Activated CD4-positive, alpha-beta memory T cell treated with anti-CD3 and anti-CD28 coated beads for 36 hours (primary cell): ENCODE measurements at regions of chr22 and their contacts with region 1.

Region 1: GRCh38 chr22:30742291-30743256 is 47.9 kb downstream of the OSBP2 start:
- DNase-seq: peak; percentile 78
- H3K4me3 Mint-ChIP-seq: peak overlapping the region; percentile 33
- H3K27ac Mint-ChIP-seq: peak overlapping the region; percentile 95
- H3K4me1 Mint-ChIP-seq: peaks cover 70% of the 10 kb centered on the region
- H3K27me3 Mint-ChIP-seq: peaks cover 2% of the 10 kb centered on the region

Region 2: DNA sequence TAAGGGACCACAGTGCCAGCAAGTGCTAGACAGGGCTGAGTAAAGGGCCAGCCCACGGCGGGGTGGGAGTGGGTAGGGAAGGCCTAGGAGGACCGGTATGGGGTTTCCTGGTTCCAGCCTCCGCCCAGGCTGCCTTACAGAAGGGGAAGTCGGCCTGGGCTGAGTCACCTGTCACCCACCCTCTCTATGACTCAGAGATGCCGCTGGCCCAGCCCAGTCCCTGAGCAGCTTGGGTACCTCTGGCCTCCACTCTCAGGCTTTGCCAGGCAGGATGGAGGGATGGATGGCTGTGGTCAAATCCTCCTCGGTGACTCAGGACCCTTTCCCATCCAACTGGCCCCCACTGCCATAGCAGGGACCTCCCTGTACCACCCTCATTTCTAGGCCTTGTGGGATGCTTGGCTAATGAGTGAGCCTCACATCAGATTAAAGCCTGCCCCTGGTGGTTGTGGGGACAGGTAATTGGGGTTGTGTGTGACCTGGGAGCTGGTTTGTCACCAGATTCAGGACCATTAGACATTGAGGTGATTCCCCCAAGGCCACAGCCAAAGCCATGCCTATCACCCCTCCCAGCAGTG is 93.1 kb before region 1 on chr22:
- CTCF ChIA-PET with region 1: interaction called, 11 read pairs
- POLR2A ChIA-PET with region 1: interaction called, 6 read pairs
- intact Hi-C with region 1: loop called (anchors 1 kb)
- DNase-seq: peak; percentile 94
- H3K4me3 Mint-ChIP-seq: no peak overlapping the region
- H3K27ac Mint-ChIP-seq: peak overlapping the region; percentile 85
- H3K4me1 Mint-ChIP-seq: peaks cover 31% of the 10 kb centered on the region
- H3K27me3 Mint-ChIP-seq: no peaks in the 10 kb centered on the region

Region 3: GRCh38 chr22:30667494-30668385 is 74.8 kb before region 1 on chr22 and contains the start of gene DUSP18:
- CTCF ChIA-PET with region 1: no interaction called
- POLR2A ChIA-PET with region 1: no interaction called
- intact Hi-C with region 1: loop called (anchors 2 kb)
- DNase-seq: peak; percentile 97
- H3K4me3 Mint-ChIP-seq: peak within 1 kb of the TSS; percentile 96
- H3K27ac Mint-ChIP-seq: peak within 1 kb of the TSS; percentile 62
- H3K4me1 Mint-ChIP-seq: peaks cover 21% of the 10 kb centered on the region
- H3K27me3 Mint-ChIP-seq: peaks cover 3% of the 10 kb centered on the region
- total RNA-seq, gene DUSP18: 9.2 to 10.6 TPM

Region 4: DNA sequence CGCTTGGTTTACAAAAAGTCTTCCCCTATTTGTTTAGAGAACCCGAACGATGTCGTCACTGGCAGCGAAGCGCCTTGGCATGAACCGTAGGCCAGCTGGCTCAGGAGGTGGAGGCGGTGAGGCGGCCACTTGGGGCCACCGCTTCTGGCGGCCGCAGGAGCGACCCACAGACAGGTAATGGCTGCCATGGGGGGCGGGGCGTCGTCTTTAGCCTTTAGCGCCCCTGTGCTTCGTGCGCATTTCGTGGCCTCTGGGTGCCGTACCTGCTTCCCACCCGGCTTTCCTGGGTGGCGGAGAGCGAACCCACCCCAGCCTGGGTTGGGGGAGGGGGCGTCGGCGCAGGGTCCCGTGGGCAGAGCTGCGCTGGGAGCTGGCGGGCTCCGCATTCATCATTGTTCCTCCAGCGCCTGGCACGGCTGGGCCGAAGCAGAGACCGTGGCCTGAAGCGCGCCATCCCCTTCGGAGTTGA is 48.4 kb before region 1 on chr22:
- CTCF ChIA-PET with region 1: interaction called, 8 read pairs
- POLR2A ChIA-PET with region 1: interaction called, 3 read pairs
- intact Hi-C with region 1: loop called (anchors 1 kb)
- DNase-seq: peak; percentile 72
- H3K4me3 Mint-ChIP-seq: peak overlapping the region; percentile 81
- H3K27ac Mint-ChIP-seq: peak overlapping the region; percentile 57
- H3K4me1 Mint-ChIP-seq: peaks cover 16% of the 10 kb centered on the region
- H3K27me3 Mint-ChIP-seq: peaks cover 7% of the 10 kb centered on the region

Region 5: GRCh38 chr22:30705710-30706651 is 36.6 kb before region 1 on chr22:
- CTCF ChIA-PET with region 1: no interaction called
- POLR2A ChIA-PET with region 1: interaction called, 4 read pairs
- intact Hi-C with region 1: loop called (anchors 1 kb)
- DNase-seq: peak; percentile 56
- H3K4me3 Mint-ChIP-seq: no peak overlapping the region
- H3K27ac Mint-ChIP-seq: peak overlapping the region; percentile 57
- H3K4me1 Mint-ChIP-seq: peaks cover 23% of the 10 kb centered on the region
- H3K27me3 Mint-ChIP-seq: no peaks in the 10 kb centered on the region

Region 6: GRCh38 chr22:30717331-30717921 is 25.1 kb before region 1 on chr22:
- CTCF ChIA-PET with region 1: no interaction called
- POLR2A ChIA-PET with region 1: interaction called, 6 read pairs
- intact Hi-C with region 1: loop called (anchors 1 kb)
- DNase-seq: peak; percentile 60
- H3K4me3 Mint-ChIP-seq: no peak overlapping the region
- H3K27ac Mint-ChIP-seq: no peak overlapping the region
- H3K4me1 Mint-ChIP-seq: peaks cover 8% of the 10 kb centered on the region
- H3K27me3 Mint-ChIP-seq: no peaks in the 10 kb centered on the region

Region 7: DNA sequence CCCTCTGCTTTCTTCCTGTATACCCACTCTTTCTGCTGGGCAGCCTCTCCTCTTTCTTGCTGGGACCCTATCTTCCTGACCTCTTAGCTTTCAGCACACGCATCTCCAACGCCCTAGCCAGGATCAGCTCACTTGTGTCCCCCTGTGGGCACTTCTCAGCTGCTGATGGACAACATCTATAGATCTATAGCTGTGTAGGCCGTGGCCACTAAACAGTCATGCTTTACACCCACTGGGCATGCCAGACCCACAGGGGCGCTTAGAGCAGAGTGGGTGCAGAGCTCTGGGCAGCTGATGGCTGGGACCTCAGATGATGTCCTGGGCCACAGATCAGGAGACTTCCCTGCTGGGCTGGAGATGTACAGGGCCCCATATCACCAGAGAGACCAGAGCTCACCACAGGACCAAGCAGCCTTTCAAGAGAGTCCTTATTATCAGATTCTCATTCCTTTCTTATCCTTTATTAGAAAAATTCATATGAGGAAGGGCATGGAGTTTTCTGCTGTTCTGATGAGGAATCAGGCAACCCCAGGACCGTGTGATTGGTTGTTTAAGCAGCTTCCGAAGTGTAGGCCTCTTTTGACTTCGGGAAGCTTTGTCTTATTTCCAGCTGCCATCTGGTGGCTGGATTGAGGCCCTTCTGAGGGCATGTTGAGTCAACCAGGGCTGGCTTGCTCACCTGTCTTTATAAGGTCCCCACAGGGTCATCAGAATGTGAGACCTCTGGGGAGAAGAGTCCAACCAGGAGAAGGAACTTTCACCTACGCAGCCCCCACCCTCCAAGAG is 12.6 kb after region 1 on chr22:
- CTCF ChIA-PET with region 1: interaction called, 39 read pairs
- POLR2A ChIA-PET with region 1: interaction called, 3 read pairs
- intact Hi-C with region 1: no loop called
- DNase-seq: peak; percentile 77
- H3K4me3 Mint-ChIP-seq: no peak overlapping the region
- H3K27ac Mint-ChIP-seq: no peak overlapping the region
- H3K4me1 Mint-ChIP-seq: no peaks in the 10 kb centered on the region
- H3K27me3 Mint-ChIP-seq: no peaks in the 10 kb centered on the region

Region 8: GRCh38 chr22:31425331-31426050 is 682.9 kb after region 1 on chr22:
- CTCF ChIA-PET with region 1: no interaction called
- POLR2A ChIA-PET with region 1: no interaction called
- intact Hi-C with region 1: no loop called
- DNase-seq: no peak
- H3K4me3 Mint-ChIP-seq: no peak overlapping the region
- H3K27ac Mint-ChIP-seq: peak overlapping the region; percentile 4
- H3K4me1 Mint-ChIP-seq: no peaks in the 10 kb centered on the region
- H3K27me3 Mint-ChIP-seq: no peaks in the 10 kb centered on the region